ENCODE measurements at regions of chr11 and their contacts with region 1.

Region 1: GRCh38 chr11:86041975-86042378 is 26.9 kb downstream of the PICALM start:
- DNase-seq: no peak

Region 2: DNA sequence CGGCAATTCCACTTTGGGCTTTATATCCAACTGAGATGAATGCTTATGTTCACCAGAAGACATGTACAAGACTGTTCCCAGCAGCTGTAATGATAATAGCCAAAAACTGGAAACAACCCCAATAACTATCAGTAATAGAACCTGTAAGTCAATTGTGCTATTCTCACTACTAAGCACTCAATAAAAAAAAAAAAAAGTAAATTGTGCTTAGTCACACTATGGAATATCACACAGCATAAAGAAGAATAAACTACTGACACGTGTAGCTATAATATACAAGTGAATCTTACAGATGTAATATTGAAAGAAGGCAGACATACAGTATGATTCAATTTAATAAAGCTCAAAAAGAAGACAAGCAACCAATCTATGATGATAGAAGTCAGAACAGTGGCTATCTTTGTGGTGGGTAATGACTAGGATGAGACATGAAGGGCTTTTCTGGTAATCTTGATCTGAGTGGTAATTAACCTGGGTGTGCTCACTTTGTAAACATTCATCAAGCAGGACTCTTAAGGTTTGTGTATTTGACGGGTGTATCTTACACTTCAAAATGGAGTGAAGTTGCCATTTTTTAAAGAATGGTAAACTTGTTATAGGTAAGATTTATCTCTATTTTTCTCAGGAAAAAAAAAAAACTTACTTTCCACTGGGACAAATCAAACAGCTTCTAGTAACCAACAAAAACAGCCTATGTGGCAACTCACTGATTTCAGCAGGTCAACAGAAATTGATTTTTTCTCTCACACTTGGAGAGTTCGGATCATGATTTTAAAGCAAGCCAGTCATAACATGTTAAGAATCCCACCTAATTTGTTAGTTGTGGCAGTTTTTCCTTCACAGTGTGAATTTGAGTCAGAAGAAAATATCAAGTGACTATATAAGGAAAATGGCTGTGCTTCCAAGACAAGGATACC is 102.6 kb before region 1 on chr11:
- intact Hi-C with region 1: no loop called
- DNase-seq: no peak

Region 3: GRCh38 chr11:86182976-86183584 is 141.1 kb after region 1 on chr11:
- intact Hi-C with region 1: loop called in 1 of 2 experiments (anchors 5 kb)
- DNase-seq: no peak